Caco-2 (cell line): ENCODE measurements at regions of chr3 and their contacts with region 1.

Region 1: GRCh38 chr3:94101851-94102250 is 39.0 kb downstream of the NSUN3 start:
- DNase-seq: no peak
- H3K4me3 ChIP-seq: no peak overlapping the region
- H3K4me3 Mint-ChIP-seq: no peak overlapping the region
- H3K27ac Mint-ChIP-seq: no peak overlapping the region
- H3K4me1 ChIP-seq: no peaks in the 10 kb centered on the region
- H3K4me1 Mint-ChIP-seq: no peaks in the 10 kb centered on the region
- H3K27me3 ChIP-seq: no peaks in the 10 kb centered on the region
- H3K27me3 Mint-ChIP-seq: no peaks in the 10 kb centered on the region
- CTCF ChIP-seq: no peak

Region 2: GRCh38 chr3:94004301-94004910 is 97.4 kb before region 1 on chr3:
- CTCF ChIA-PET with region 1: no interaction called
- POLR2A ChIA-PET with region 1: no interaction called
- intact Hi-C with region 1: loop called (anchors 1 kb)
- DNase-seq: peak in 1 of 2 experiments; percentile 24
- H3K4me3 ChIP-seq: no peak overlapping the region
- H3K4me3 Mint-ChIP-seq: peak overlapping the region; percentile 14
- H3K27ac Mint-ChIP-seq: no peak overlapping the region
- H3K4me1 ChIP-seq: no peaks in the 10 kb centered on the region
- H3K4me1 Mint-ChIP-seq: no peaks in the 10 kb centered on the region
- H3K27me3 ChIP-seq: no peaks in the 10 kb centered on the region
- H3K27me3 Mint-ChIP-seq: no peaks in the 10 kb centered on the region
- CTCF ChIP-seq: peak; percentile 44 to 79

Region 3: DNA sequence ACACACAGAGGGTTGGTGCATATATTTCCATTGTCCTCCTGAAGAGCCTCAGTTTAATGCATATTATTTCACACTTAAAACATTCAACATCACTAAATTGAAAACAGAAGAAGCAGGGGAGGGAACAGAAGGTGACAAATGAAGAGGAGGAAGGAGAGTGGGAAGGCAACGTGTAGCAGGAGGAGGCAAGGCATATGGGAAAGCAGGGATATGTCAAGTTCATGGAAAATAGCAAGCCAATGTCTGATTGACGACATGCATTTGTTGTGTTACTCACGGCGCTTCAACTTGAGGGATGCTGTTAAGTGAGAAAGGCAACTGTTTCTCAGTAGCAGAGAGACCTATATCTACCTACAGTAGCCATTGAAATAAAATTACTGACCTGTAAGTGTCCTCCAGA is 115.6 kb after region 1 on chr3:
- CTCF ChIA-PET with region 1: no interaction called
- POLR2A ChIA-PET with region 1: no interaction called
- intact Hi-C with region 1: no loop called
- DNase-seq: no peak
- H3K4me3 ChIP-seq: no peak overlapping the region
- H3K4me3 Mint-ChIP-seq: no peak overlapping the region
- H3K27ac Mint-ChIP-seq: no peak overlapping the region
- H3K4me1 ChIP-seq: no peaks in the 10 kb centered on the region
- H3K4me1 Mint-ChIP-seq: no peaks in the 10 kb centered on the region
- H3K27me3 ChIP-seq: no peaks in the 10 kb centered on the region
- H3K27me3 Mint-ChIP-seq: no peaks in the 10 kb centered on the region
- CTCF ChIP-seq: no peak

Region 4: GRCh38 chr3:94241986-94242385 is 140.1 kb after region 1 on chr3:
- CTCF ChIA-PET with region 1: no interaction called
- POLR2A ChIA-PET with region 1: no interaction called
- intact Hi-C with region 1: no loop called
- DNase-seq: no peak
- H3K4me3 ChIP-seq: no peak overlapping the region
- H3K4me3 Mint-ChIP-seq: no peak overlapping the region
- H3K27ac Mint-ChIP-seq: no peak overlapping the region
- H3K4me1 ChIP-seq: no peaks in the 10 kb centered on the region
- H3K4me1 Mint-ChIP-seq: no peaks in the 10 kb centered on the region
- H3K27me3 ChIP-seq: no peaks in the 10 kb centered on the region
- H3K27me3 Mint-ChIP-seq: no peaks in the 10 kb centered on the region
- CTCF ChIP-seq: no peak